GM12878 (cell line): ENCODE measurements at regions of chr10 and their contacts with region 1.

Region 1: DNA sequence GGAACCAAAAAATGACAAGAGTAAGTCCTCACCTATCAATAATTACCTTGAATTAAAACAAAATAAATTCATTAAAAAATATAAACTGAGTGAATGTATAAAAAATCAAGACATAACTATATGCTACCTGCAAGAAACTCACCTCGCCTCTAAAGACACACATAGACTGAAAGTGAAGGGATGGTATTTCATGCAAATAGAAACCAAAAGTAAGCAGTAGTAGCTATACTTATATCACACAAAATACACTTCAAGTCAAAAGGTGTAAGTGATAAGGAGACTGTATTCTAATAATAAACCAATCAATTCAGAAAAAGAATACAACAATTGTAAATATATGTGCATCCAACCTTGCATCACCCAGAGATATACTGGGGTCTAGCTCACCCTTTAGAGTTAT is 332.6 kb downstream of the SH2D4B start:
- DNase-seq: peak; percentile 13
- ATAC-seq: peak; percentile 96
- H3K4me3 ChIP-seq: peak overlapping the region; percentile 28; the same call in 1 of the 2 replicates
- H3K27ac ChIP-seq: peak overlapping the region; percentile 6; the same call in 1 of the 2 replicates
- H3K4me1 ChIP-seq: peaks cover 6% of the 10 kb centered on the region
- H3K27me3 ChIP-seq: no peaks in the 10 kb centered on the region
- CTCF ChIP-seq: no peak
- EP300 ChIP-seq: no peak
- POLR2A ChIP-seq: no peak
- RAD21 ChIP-seq: no peak

Region 2: GRCh38 chr10:80453701-80454513 is 416.4 kb before region 1 on chr10 and contains the start of gene TSPAN14:
- CTCF ChIA-PET with region 1: no interaction called
- POLR2A ChIA-PET with region 1: no interaction called
- RAD21 ChIA-PET with region 1: no interaction called
- SMC1A ChIA-PET with region 1: no interaction called
- in situ Hi-C with region 1: no loop called
- intact Hi-C with region 1: no loop called
- DNase-seq: no peak
- ATAC-seq: peak; percentile 65
- H3K4me3 ChIP-seq: peak within 1 kb of the TSS; percentile 92
- H3K27ac ChIP-seq: peak within 1 kb of the TSS; percentile 67
- H3K4me1 ChIP-seq: peaks cover 46% of the 10 kb centered on the region
- H3K27me3 ChIP-seq: no peaks in the 10 kb centered on the region
- CTCF ChIP-seq: no peak
- EP300 ChIP-seq: no peak
- POLR2A ChIP-seq: peak; percentile 74
- RAD21 ChIP-seq: no peak
- polyA plus RNA-seq, gene TSPAN14: 2.5 to 2.6 TPM

Region 3: GRCh38 chr10:80760914-80761371 is 109.3 kb before region 1 on chr10:
- CTCF ChIA-PET with region 1: no interaction called
- POLR2A ChIA-PET with region 1: no interaction called
- RAD21 ChIA-PET with region 1: no interaction called
- SMC1A ChIA-PET with region 1: no interaction called
- in situ Hi-C with region 1: no loop called
- intact Hi-C with region 1: no loop called
- DNase-seq: peak; percentile 30
- ATAC-seq: peak; percentile 72
- H3K4me3 ChIP-seq: no peak overlapping the region
- H3K27ac ChIP-seq: no peak overlapping the region
- H3K4me1 ChIP-seq: no peaks in the 10 kb centered on the region
- H3K27me3 ChIP-seq: no peaks in the 10 kb centered on the region; a peak in 2 of 4 replicates
- CTCF ChIP-seq: no peak
- EP300 ChIP-seq: no peak
- POLR2A ChIP-seq: no peak
- RAD21 ChIP-seq: no peak

Region 4: GRCh38 chr10:80805343-80806020 is 64.8 kb before region 1 on chr10:
- CTCF ChIA-PET with region 1: no interaction called
- POLR2A ChIA-PET with region 1: no interaction called
- RAD21 ChIA-PET with region 1: no interaction called
- SMC1A ChIA-PET with region 1: no interaction called
- in situ Hi-C with region 1: no loop called
- intact Hi-C with region 1: no loop called
- DNase-seq: no peak
- ATAC-seq: no peak
- H3K4me3 ChIP-seq: no peak overlapping the region
- H3K27ac ChIP-seq: no peak overlapping the region
- H3K4me1 ChIP-seq: no peaks in the 10 kb centered on the region
- H3K27me3 ChIP-seq: no peaks in the 10 kb centered on the region
- CTCF ChIP-seq: no peak
- EP300 ChIP-seq: no peak
- POLR2A ChIP-seq: no peak
- RAD21 ChIP-seq: no peak

Region 5: GRCh38 chr10:80855348-80855971 is 14.8 kb before region 1 on chr10:
- CTCF ChIA-PET with region 1: interaction called, 8 read pairs
- POLR2A ChIA-PET with region 1: no interaction called
- RAD21 ChIA-PET with region 1: interaction called, 3 read pairs
- SMC1A ChIA-PET with region 1: interaction called, 23 read pairs
- in situ Hi-C with region 1: no loop called
- intact Hi-C with region 1: no loop called
- DNase-seq: peak; percentile 13
- ATAC-seq: peak; percentile 92
- H3K4me3 ChIP-seq: no peak overlapping the region
- H3K27ac ChIP-seq: no peak overlapping the region
- H3K4me1 ChIP-seq: no peaks in the 10 kb centered on the region
- H3K27me3 ChIP-seq: peaks cover 0 to 2% of the 10 kb centered on the region in 2 experiments; a peak in 1 of 4 replicates
- CTCF ChIP-seq: peak; percentile 48 to 72 (median 67); a peak in 5 of 6 replicates
- EP300 ChIP-seq: no peak
- POLR2A ChIP-seq: no peak
- RAD21 ChIP-seq: peak; percentile 49